ENCODE measurements at regions of chr2 and their contacts with region 1.

Region 1: GRCh38 chr2:15636972-15637785 is 45.5 kb downstream of the DDX1 start:
- DNase-seq: peak; percentile 85
- H3K4me3 ChIP-seq: no peak overlapping the region
- H3K27ac ChIP-seq: peak overlapping the region; percentile 2
- H3K4me1 ChIP-seq: peaks cover 62% of the 10 kb centered on the region
- H3K27me3 ChIP-seq: no peaks in the 10 kb centered on the region
- CTCF ChIP-seq: peak; percentile 75 to 95
- POLR2A ChIP-seq: no peak

Region 2: GRCh38 chr2:14330884-14331283 is 1306.3 kb before region 1 on chr2:
- CTCF ChIA-PET with region 1: no interaction called
- POLR2A ChIA-PET with region 1: no interaction called
- dilution Hi-C with region 1: no loop called
- intact Hi-C with region 1: no loop called
- DNase-seq: no peak
- H3K4me3 ChIP-seq: no peak overlapping the region
- H3K27ac ChIP-seq: no peak overlapping the region
- H3K4me1 ChIP-seq: no peaks in the 10 kb centered on the region
- H3K27me3 ChIP-seq: no peaks in the 10 kb centered on the region
- CTCF ChIP-seq: no peak
- POLR2A ChIP-seq: no peak

Region 3: GRCh38 chr2:15704086-15704787 is 67.1 kb after region 1 on chr2:
- CTCF ChIA-PET with region 1: interaction called, 10 read pairs
- POLR2A ChIA-PET with region 1: interaction called, 3 read pairs
- dilution Hi-C with region 1: no loop called
- intact Hi-C with region 1: loop called (anchors 1 kb)
- DNase-seq: peak; percentile 76
- H3K4me3 ChIP-seq: no peak overlapping the region
- H3K27ac ChIP-seq: peak overlapping the region; percentile 85
- H3K4me1 ChIP-seq: peaks cover 35% of the 10 kb centered on the region
- H3K27me3 ChIP-seq: no peaks in the 10 kb centered on the region
- CTCF ChIP-seq: no peak
- POLR2A ChIP-seq: no peak

Region 4: GRCh38 chr2:15748736-15749323 is 111.7 kb after region 1 on chr2:
- CTCF ChIA-PET with region 1: interaction called, 3 read pairs
- POLR2A ChIA-PET with region 1: no interaction called
- dilution Hi-C with region 1: no loop called
- intact Hi-C with region 1: loop called (anchors 1 kb)
- DNase-seq: no peak
- H3K4me3 ChIP-seq: no peak overlapping the region
- H3K27ac ChIP-seq: no peak overlapping the region
- H3K4me1 ChIP-seq: peaks cover 16% of the 10 kb centered on the region
- H3K27me3 ChIP-seq: peaks cover 0 to 2% of the 10 kb centered on the region in 2 experiments
- CTCF ChIP-seq: peak; percentile 51
- POLR2A ChIP-seq: no peak

Region 5: GRCh38 chr2:15939854-15940660 is 302.9 kb after region 1 on chr2 and contains the start of gene MYCN:
- CTCF ChIA-PET with region 1: interaction called, 11 read pairs
- POLR2A ChIA-PET with region 1: no interaction called
- dilution Hi-C with region 1: no loop called
- intact Hi-C with region 1: loop called (anchors 1 kb)
- DNase-seq: peak; percentile 59
- H3K4me3 ChIP-seq: peak within 1 kb of the TSS in 2 of 3 experiments; percentile 2 to 47
- H3K27ac ChIP-seq: no peak within 1 kb of the TSS
- H3K4me1 ChIP-seq: peaks cover 13% of the 10 kb centered on the region
- H3K27me3 ChIP-seq: peaks cover 42 to 57% of the 10 kb centered on the region in 2 experiments
- CTCF ChIP-seq: no peak
- POLR2A ChIP-seq: no peak
- total RNA-seq, gene MYCN: 3.6 and 6.8 TPM in 2 replicates

Region 6: GRCh38 chr2:16507655-16508489 is 870.7 kb after region 1 on chr2:
- CTCF ChIA-PET with region 1: interaction called, 5 read pairs
- POLR2A ChIA-PET with region 1: no interaction called
- dilution Hi-C with region 1: no loop called
- intact Hi-C with region 1: loop called (anchors 1 kb)
- DNase-seq: peak; percentile 39
- H3K4me3 ChIP-seq: peak overlapping the region in 1 of 3 experiments; percentile 16
- H3K27ac ChIP-seq: no peak overlapping the region
- H3K4me1 ChIP-seq: no peaks in the 10 kb centered on the region
- H3K27me3 ChIP-seq: peaks cover 19 to 27% of the 10 kb centered on the region in 2 experiments
- CTCF ChIP-seq: peak; percentile 47 to 80
- POLR2A ChIP-seq: no peak

Region 7: DNA sequence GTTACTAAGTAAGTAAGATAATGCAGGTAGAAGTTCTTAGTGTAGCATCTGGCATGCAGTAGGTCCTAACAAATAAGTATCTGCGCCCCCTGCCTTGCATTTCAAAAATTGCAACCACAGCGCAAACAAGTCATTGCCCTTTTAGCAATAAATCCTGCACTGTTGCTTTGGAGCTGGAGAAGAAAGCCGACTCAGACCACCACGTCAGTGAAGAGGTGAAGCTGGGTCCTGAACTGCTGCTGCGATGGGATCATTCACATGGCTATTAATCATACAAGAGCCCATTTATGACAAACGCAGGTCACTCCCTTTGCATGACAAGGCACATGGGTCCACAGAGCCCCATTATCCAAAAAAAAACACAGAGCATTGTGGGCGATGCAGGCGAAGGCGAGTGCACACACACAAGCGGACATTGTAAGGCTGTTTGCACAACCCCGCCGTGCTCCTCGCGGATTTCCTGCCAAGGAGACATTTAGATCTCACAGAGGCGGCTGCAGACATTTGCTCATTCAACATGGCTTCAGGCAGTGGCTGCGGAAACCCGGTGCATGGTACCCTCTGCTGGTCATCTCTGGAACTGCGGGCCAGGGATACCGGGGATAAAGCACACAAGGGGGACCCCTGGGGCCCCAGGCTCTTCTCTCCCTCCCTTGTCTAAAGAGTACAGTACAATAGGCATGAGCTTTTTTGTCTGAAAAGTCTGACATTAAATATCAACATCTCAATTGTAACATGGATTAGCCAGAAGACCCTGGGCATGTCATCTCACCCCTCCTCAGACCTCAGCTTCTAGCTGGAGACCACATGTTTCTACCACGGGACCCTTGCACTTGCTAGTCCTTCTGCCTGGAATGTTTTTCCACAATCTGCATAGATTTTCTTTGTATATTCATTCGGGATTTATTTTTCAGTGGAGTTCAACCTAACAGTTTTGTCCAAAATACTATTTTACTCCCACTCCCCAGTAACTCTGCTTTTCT is 971.8 kb after region 1 on chr2:
- CTCF ChIA-PET with region 1: interaction called, 12 read pairs
- POLR2A ChIA-PET with region 1: no interaction called
- dilution Hi-C with region 1: no loop called
- intact Hi-C with region 1: loop called (anchors 1 kb)
- DNase-seq: peak; percentile 86
- H3K4me3 ChIP-seq: peak overlapping the region in 2 of 3 experiments; percentile 21 to 57
- H3K27ac ChIP-seq: peak overlapping the region; percentile 21
- H3K4me1 ChIP-seq: peaks cover 8% of the 10 kb centered on the region
- H3K27me3 ChIP-seq: no peaks in the 10 kb centered on the region
- CTCF ChIP-seq: peak; percentile 80 to 98
- POLR2A ChIP-seq: no peak

Measured in endothelial cell of umbilical vein (primary cell).